ENCODE measurements at regions of chr12 and their contacts with region 1.

Region 1: DNA sequence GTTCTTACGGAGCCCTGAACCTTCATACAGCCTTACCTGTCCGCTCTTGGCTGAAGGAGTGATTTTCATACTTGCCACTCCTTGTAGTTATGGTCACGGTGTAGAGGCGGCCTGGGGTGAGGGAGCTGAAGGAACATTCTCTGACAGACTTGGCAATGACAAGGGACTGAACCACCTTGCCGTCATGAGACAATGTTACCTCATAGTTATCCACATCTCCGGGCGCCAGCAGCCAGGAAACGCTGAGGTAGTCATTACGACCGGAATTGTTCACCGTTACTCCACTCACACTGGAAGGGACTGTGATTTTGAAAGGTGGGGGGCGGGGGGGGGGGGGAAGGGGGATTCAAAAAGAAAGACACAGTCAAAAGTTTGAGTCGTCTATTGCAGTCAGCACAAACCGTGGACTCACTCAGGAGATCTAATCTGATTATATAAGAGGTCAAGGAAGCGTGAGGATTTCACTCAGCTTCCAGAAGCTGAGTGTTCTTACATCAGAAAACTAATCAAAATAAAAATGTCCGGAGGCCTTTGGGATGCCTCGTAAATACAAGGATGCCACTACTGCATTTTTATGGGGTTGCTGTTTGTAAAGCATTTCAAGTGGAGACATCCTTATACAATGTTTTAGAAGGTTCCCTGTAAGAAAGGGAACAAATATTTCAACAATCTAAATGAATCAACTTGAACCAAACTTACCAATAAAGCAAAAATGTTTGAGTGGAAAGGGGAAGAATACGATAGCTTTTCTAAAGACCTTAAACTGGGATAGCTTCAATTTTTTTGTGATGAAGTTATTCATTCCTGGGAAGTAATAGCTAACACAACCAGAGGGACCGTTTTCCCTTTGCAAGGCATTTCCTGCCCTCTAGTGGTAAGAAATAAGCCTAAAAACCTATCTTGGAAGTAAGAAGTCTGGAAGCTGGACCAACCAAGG is 60.6 kb downstream of the PTPRB start:
- DNase-seq: peak in 1 of 3 donors; percentile 21
- ATAC-seq: peak; percentile 74
- H3K4me3 ChIP-seq: no peak overlapping the region
- H3K4me1 ChIP-seq: no peaks in the 10 kb centered on the region
- CTCF ChIP-seq: peak; percentile 44

Region 2: DNA sequence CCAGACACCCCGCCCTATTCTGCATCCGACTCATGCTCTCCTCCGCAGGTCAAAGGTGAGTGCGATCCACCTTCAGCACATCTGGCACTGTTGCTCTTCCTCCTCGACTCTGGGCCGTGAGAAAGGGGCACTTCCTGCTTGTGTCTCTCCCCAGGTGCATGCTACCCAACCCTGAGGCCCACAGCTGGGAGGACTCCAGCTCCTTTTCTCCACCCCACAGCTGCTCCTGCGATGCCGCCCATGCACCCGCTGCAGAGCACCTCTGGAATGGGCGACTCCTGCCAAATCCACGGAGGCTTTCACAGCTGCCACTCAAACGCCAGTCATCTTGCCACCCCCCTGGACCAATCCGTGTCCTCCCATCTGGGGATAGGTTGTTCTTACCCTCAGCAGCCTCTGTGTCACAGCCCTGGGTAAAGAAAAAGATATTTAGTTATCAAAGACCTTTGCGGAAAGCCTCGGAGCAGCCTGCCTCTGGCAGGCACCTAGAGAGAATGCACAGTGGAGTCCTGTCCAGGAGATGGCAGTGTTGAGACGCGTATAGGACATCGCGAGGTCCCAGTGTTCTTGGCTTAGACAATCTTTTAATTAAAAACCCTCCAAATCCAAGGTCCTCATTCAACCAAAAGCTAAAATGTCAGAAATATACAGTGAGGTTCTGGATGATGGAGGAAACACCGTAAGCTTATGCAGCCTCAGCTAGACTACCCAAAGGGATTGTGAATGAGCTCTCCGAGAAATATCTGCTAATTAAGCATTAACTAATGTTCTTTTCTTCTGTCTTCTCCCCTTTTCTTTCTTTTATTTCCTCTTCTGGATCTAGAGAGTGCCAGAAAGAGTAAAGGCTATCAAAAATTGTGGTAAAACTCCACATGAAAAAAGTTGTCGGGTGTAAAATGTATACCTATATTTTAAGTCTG is 697.3 kb before region 1 on chr12:
- intact Hi-C with region 1: loop called (anchors 2 to 5 kb)
- DNase-seq: peak; percentile 54 to 88 (median 70)
- ATAC-seq: peak; percentile 96
- H3K4me3 ChIP-seq: no peak overlapping the region
- H3K4me1 ChIP-seq: no peaks in the 10 kb centered on the region
- CTCF ChIP-seq: peak; percentile 71

Region 3: GRCh38 chr12:69900720-69901131 is 675.9 kb before region 1 on chr12:
- intact Hi-C with region 1: loop called in 1 of 2 experiments (anchors 5 kb)
- DNase-seq: peak in 1 of 3 donors; percentile 93
- ATAC-seq: peak; percentile 93
- H3K4me3 ChIP-seq: no peak overlapping the region
- H3K4me1 ChIP-seq: no peaks in the 10 kb centered on the region
- CTCF ChIP-seq: peak; percentile 25

Region 4: DNA sequence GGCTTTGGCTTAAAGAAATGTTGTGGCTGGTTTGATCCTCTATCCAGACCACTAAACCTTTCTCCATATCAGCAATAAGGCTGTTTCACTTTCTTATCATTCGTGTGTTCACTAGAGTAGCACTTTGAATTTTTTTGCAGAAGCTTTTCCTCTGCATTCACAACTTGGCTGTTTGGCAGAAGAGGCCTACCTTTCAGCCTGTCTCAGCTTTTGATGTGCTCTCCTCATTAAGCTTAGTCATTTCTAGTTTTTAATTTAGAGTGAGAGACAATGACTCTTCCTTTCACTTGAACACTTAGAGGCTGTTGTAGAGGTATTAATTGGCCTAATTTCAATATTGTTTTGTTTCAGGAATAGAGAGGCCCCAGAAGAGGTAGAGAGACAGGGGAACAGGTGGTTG is 196.8 kb before region 1 on chr12:
- intact Hi-C with region 1: no loop called
- DNase-seq: no peak
- ATAC-seq: no peak
- H3K4me3 ChIP-seq: no peak overlapping the region
- H3K4me1 ChIP-seq: no peaks in the 10 kb centered on the region
- CTCF ChIP-seq: no peak